Kidney (tissue), 22 donors: ENCODE measurements at regions of chr10 and their contacts with region 1.

Region 1: DNA sequence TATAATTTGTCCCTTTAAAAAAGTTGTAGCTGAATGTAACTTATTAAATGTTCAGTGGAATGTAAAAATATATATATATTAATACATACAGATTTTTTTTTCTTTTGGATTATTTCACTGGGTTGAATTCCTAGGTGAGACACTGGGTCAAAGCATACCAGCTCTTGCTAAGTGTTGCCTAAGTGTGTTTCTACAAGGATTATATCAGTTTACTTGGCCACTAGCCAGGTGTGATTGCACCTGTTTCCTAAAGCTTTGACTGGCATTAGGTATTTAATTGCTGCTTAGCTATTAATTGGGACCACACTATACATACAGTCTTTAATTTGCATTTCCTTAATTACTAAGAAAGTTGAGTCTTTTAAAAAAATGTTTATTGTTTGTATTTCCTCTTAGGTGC is 5.5 kb upstream of the ELOVL3 start:
- DNase-seq: no peak
- H3K4me3 ChIP-seq: no peak overlapping the region
- H3K27ac ChIP-seq: no peak overlapping the region
- H3K4me1 ChIP-seq: peaks cover 0 to 2% (median 2%) of the 10 kb centered on the region in 3 donors
- H3K27me3 ChIP-seq: no peaks in the 10 kb centered on the region
- CTCF ChIP-seq: no peak

Region 2: GRCh38 chr10:101986625-101986973 is 234.0 kb before region 1 on chr10:
- intact Hi-C with region 1: no loop called
- DNase-seq: no peak
- H3K4me3 ChIP-seq: no peak overlapping the region
- H3K27ac ChIP-seq: no peak overlapping the region
- H3K4me1 ChIP-seq: no peaks in the 10 kb centered on the region
- H3K27me3 ChIP-seq: no peaks in the 10 kb centered on the region
- CTCF ChIP-seq: no peak

Region 3: DNA sequence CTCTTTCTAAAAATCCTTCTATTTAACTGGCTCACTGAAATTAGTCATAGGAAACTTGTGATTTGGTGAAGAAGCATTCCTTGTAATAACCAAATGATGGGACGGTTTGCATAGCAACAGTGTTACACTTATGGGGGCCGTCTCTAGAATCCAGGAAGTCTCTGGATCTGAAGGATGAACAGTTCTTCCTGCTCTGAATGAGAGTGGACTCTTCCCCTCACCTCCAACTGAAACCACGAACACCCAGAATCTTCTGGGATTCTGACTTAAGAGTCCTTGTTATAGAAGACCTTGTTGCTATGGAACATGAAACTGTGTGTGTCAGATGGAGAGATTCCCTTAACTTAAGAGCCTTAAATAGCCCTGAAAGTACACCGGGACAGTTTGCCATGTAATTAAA is 45.2 kb before region 1 on chr10:
- intact Hi-C with region 1: no loop called
- DNase-seq: no peak
- H3K4me3 ChIP-seq: no peak overlapping the region
- H3K27ac ChIP-seq: no peak overlapping the region
- H3K4me1 ChIP-seq: no peaks in the 10 kb centered on the region
- H3K27me3 ChIP-seq: no peaks in the 10 kb centered on the region
- CTCF ChIP-seq: no peak

Region 4: GRCh38 chr10:102484021-102484420 is 263.4 kb after region 1 on chr10:
- intact Hi-C with region 1: loop called (anchors 5 kb)
- DNase-seq: peak in 1 of 5 donors; percentile 51
- H3K4me3 ChIP-seq: no peak overlapping the region
- H3K27ac ChIP-seq: no peak overlapping the region
- H3K4me1 ChIP-seq: no peaks in the 10 kb centered on the region
- H3K27me3 ChIP-seq: no peaks in the 10 kb centered on the region
- CTCF ChIP-seq: no peak